ENCODE measurements at regions of chr17 and their contacts with region 1.

Region 1: DNA sequence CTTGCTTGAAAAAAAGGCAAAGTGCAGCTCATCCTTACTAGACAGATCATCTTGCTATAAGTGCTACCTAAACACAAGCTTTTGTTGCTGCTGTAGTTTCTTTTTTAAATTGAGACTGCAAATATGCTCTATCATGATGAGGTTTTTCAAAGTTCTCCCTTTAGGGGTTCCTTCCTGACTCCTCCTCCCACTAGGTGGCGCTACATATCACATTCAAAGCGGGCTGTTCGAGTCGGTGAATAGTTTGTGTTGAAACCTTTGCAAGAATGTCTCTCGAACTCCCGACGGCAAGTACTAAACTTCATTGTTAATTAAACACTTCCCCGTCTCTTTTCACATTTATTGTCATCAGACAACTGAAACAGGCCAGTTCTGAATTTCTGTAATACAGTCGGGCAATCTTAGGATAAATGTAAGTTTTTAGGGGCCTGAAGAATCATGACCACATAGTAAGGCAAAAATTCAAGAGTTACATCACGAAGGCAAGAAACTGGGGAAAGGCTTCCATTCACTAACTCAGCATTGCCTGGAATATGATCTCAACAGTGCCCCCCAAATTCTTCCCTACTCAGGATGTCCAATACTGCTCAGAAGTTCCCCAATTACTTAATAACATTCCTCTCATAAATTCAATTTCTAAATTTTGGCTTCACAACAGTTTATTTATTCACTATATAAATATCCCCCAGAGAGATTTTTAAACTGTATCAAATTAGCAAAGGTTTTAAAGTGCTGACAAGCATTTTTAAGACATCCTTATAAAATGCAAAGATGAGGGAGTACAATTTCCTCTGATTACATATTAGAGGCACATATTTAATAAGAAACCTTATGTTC is 6.7 kb downstream of the HS3ST3A1 start:
- DNase-seq: peak; percentile 83
- H3K4me3 ChIP-seq: no peak overlapping the region
- H3K27ac ChIP-seq: no peak overlapping the region
- H3K4me1 ChIP-seq: no peaks in the 10 kb centered on the region
- H3K27me3 ChIP-seq: peaks cover under 1% of the 10 kb centered on the region
- CTCF ChIP-seq: peak; percentile 85

Region 2: DNA sequence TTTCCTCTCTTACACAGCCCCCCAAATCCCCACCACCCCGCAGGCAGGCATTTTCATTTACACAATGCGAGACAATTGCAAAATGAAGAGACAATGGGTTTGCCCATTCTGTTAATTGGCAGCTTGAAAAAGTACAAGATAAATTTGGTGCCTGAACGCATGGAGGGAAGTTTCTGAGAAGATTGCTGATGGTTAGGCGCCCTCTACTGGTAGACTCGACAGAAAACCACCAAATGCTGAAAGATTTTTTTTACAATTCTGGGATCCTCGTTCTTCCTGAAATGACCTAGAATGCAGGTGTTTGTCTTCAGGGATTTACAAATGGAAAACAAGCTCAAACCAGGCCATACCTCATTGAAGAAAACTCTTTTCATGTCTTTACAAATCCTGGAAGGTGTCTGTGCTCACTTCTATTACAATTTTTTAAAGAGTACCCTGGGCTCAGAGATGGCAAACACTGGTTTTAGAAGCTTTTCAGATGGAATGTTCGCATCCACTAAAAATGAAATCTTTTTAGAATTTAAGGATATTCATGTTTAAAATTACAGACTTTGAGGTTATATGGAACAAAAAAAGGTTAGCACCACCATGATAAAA is 1331.6 kb after region 1 on chr17:
- intact Hi-C with region 1: loop called (anchors 5 kb)
- DNase-seq: peak; percentile 44
- H3K4me3 ChIP-seq: no peak overlapping the region
- H3K27ac ChIP-seq: no peak overlapping the region
- H3K4me1 ChIP-seq: no peaks in the 10 kb centered on the region
- H3K27me3 ChIP-seq: no peaks in the 10 kb centered on the region
- CTCF ChIP-seq: peak; percentile 69